ENCODE measurements at regions of chr2 and their contacts with region 1.

Region 1: DNA sequence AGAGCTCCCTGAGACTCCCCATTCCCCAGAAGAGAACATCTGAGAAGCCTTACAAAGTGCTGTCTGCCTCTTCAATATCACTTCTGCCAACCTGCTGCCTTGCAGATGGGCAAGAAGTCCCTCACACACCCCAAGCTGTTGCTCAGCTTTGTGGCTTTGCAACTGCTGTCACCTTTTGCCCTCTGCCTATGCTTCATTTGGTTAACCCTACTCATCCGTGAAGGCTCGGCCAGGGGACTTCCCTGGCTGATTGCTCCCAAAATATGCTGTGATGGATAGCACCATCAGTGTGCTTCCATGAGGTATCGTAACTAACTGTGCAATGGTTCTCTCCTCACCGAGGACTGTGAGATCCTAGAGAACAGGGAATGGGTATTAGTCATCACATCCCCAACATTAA is 88.9 kb upstream of the CYP1B1 start:
- DNase-seq: no peak
- ATAC-seq: no peak
- H3K4me3 ChIP-seq: no peak overlapping the region
- H3K27ac ChIP-seq: no peak overlapping the region
- H3K4me1 ChIP-seq: no peaks in the 10 kb centered on the region
- H3K27me3 ChIP-seq: peaks cover 0 to 1% (median 0%) of the 10 kb centered on the region in 3 donors
- CTCF ChIP-seq: no peak

Region 2: DNA sequence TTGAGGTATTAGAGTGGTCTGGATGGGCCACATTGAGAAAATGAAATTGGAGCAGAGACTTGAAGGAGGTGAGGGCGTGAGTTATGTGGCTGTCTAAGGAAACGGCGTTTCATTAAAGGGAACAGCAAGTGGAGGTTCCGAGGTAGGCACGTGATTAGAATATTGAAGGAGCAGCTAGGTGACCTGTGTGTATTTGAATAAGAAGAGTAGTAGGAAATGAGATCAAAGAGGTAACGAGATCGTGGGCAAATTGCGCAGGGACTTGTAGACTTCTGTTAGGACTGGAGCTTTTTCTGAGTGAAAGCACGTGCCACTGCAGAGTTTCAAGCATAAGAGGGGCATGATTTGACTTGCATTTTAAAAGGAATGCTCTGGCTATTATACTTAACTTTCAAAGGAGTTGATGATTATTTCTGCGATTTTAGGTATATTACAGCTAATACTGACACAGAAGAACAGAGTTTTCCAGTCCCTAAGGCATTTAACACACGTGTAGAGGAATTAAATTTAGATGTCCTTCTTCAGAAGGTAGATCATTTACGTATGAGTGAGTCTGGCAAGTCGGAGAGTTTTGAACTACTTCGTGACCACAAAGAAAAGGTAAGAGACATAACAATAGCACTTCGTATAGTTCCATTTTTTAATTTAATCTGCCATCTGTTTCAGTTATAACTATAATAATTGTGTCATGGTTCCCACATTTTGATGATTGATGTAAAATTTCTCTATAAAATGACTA is 191.1 kb before region 1 on chr2:
- intact Hi-C with region 1: no loop called
- DNase-seq: no peak
- ATAC-seq: no peak
- H3K4me3 ChIP-seq: no peak overlapping the region
- H3K27ac ChIP-seq: no peak overlapping the region
- H3K4me1 ChIP-seq: no peaks in the 10 kb centered on the region
- H3K27me3 ChIP-seq: no peaks in the 10 kb centered on the region
- CTCF ChIP-seq: no peak

Region 3: DNA sequence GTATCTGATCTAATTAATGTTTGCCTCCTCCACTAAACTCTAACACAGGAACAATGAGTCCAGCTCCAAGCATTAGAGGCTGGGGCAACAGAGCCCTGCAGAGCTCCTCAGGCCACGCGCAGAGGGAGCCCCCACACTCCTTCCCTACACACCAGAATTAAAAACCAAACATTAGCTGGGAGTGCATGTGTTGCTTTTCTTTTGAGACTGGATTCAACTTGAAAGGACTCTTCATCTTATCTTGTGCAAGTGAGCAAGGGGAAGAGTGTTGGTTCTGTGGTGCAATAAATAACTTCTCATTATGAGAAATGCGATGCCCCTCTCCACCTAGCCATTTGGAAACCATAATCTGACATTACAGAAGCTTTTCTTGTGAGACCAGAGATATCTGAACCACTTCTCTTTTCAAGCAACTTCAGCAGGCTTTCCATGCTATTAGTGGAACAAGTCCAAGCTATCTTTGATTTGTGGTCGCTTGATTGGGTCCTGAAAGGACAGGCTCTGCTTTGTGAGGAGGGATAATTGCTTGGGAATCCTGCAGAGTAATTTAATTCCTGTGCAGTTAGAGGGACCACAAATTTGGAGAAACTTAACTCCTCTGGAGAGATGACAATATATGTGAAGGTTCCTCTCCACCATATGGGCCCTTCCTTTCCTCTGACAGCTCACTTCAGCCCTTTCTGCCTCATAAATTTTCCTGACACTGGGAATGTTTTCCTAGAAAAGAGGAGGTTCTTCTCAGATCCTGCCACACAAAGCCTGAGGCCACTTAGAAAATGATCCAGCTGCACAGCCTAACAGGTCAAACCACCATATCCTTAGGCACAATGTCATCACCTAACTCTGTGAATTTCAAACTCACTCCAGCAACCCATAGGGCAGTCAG is 99.8 kb after region 1 on chr2:
- intact Hi-C with region 1: loop called in 1 of 2 experiments (anchors 5 kb)
- DNase-seq: no peak
- ATAC-seq: no peak
- H3K4me3 ChIP-seq: no peak overlapping the region
- H3K27ac ChIP-seq: no peak overlapping the region
- H3K4me1 ChIP-seq: no peaks in the 10 kb centered on the region
- H3K27me3 ChIP-seq: no peaks in the 10 kb centered on the region
- CTCF ChIP-seq: no peak

Measured in psoas muscle (tissue), 8 donors.